Activated T-helper 1 cell treated with anti-CD3 and anti-CD28 coated beads, Interleukin-12 subunit alpha, Interleukin-12 subunit beta, Interleukin-2, Interleukin-4 antibody, amounts not matched to agents 30 ng/mL and 10 ng/mL and 1 ng/mL, durations not matched to agents 14 hours and 24 hours and 36 hours (primary cell): ENCODE measurements at regions of chr7 and their contacts with region 1.

Region 1: DNA sequence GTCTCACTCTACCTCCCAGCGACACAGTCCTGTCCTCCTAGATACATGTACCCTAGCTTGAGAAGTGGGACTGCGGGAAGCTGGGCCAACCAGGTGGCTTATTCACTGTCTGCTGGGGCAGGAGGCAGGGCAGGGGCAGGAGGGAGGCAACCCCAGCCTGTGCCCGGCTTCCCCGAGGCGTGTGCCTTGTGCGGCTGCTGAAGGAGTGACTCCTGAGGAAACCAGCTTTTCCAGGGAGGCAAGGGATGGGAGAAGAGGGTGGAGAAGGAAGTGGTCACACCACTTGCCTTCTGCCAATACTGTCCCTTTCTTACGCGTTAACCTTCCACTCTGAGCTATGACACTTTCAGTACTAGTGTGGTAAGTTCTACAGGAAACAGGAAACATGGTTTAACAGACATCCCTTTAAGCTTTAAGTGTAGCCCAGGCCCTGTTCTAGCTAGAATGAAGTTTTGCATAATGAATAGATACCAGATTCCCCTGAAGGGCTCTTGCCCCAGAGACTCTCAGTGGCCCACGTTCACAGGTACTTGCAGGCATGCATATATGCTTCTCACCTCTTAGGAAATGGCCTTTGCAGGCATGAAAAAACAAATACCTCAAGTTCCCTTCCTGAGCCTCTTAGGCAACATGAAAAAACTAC is 40.6 kb downstream of the SYPL1 start:
- DNase-seq: peak; percentile 44
- H3K4me3 Mint-ChIP-seq: peak overlapping the region; percentile 59
- H3K27ac Mint-ChIP-seq: peak overlapping the region; percentile 93
- H3K4me1 Mint-ChIP-seq: peaks cover 42% of the 10 kb centered on the region
- H3K27me3 Mint-ChIP-seq: no peaks in the 10 kb centered on the region

Region 2: DNA sequence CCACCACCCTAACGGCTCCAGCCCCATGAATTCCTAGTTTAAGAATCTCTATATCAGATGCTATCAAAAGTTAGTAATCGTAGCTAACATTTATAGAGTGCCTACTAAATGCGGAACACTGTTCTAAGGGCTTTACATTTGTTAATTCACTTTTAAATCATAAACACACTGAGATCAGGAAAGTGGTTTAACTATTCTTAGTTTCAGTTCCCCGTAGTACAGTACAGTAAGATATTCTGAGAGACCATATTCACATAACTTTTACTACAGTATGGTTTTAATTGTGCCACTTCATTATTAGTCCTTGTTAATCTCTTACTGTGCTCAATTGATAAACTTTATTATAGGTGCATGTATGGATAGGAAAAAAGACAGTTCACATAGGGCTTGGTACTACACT is 18.2 kb after region 1 on chr7:
- intact Hi-C with region 1: loop called (anchors 2 kb)
- DNase-seq: no peak
- H3K4me3 Mint-ChIP-seq: no peak overlapping the region
- H3K27ac Mint-ChIP-seq: no peak overlapping the region
- H3K4me1 Mint-ChIP-seq: no peaks in the 10 kb centered on the region
- H3K27me3 Mint-ChIP-seq: no peaks in the 10 kb centered on the region

Region 3: GRCh38 chr7:106095634-106096033 is 24.2 kb after region 1 on chr7:
- intact Hi-C with region 1: loop called (anchors 2 kb)
- DNase-seq: no peak
- H3K4me3 Mint-ChIP-seq: no peak overlapping the region
- H3K27ac Mint-ChIP-seq: no peak overlapping the region
- H3K4me1 Mint-ChIP-seq: peaks cover 20% of the 10 kb centered on the region
- H3K27me3 Mint-ChIP-seq: no peaks in the 10 kb centered on the region